Ascending aorta (tissue), 2 donors: ENCODE measurements at regions of chr15 and their contacts with region 1.

Region 1: GRCh38 chr15:101641166-101641764 is 10.9 kb downstream of the TM2D3 start:
- DNase-seq: peak in 1 of 2 donors; percentile 81
- H3K4me3 ChIP-seq: no peak overlapping the region
- H3K27ac ChIP-seq: no peak overlapping the region
- H3K4me1 ChIP-seq: no peaks in the 10 kb centered on the region
- H3K27me3 ChIP-seq: no peaks in the 10 kb centered on the region
- CTCF ChIP-seq: peak; percentile 66 to 93 (median 87)

Region 2: DNA sequence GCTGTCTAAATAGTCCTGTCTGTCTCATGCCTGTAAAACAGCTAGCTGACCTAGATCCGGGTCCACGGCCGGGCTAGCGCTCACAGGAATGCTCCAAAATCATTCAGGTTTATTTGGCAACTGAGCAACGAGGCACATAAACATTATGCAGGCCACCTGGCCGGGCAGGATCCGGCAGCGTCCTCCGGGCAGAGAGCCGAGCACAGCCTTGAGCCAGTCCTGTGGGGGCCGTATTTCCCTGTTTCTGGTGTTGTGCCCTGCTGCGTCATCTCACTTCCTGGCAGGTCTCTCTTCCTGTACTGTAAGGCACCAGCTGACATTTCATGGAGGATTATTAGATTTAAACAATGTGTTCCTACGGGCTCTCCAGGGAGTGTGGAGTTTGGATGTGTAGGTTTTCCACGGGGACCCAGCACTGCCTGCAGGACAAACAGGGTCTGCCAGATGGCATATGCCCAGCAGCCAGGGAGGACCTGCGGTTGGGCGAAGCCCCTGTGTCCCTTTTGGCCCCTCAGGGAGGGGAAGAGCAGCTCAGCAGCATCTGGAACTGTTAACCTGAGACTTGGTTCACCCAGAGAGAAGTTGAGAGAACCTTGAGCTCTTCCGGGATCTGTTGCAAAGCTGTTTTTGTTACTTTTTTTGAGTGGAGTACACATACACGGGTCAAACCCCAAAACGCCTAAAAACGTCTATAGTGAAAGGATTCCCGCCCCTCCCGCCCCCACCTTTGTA is 738.7 kb before region 1 on chr15:
- intact Hi-C with region 1: loop called (anchors 10 kb)
- DNase-seq: peak in 1 of 2 donors; percentile 89
- H3K4me3 ChIP-seq: peak overlapping the region; percentile 39 to 46
- H3K27ac ChIP-seq: peak overlapping the region; percentile 47 to 67
- H3K4me1 ChIP-seq: peaks cover 0 to 19% of the 10 kb centered on the region in 2 donors
- H3K27me3 ChIP-seq: no peaks in the 10 kb centered on the region
- CTCF ChIP-seq: no peak

Region 3: DNA sequence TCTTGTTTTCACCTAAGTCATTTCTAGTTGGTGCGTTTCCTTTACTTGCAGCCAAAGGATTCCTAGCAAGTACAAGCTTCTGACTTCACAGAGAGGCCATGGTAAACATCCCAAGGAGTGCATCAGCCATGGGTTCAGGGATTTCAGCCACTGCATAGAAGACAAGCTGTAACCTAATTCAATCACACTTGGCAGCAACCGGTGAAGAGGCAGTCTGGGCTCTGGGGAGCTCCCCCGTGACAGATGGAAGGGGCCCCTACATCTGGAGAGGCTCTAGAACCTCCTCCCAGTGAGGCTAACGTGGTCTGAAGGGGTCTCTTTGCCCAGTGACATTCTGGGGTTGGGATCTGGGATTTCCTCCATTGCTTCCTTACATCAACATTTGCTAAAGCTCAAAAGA is 337.9 kb before region 1 on chr15:
- intact Hi-C with region 1: loop called (anchors 5 kb)
- DNase-seq: no peak
- H3K4me3 ChIP-seq: no peak overlapping the region
- H3K27ac ChIP-seq: no peak overlapping the region
- H3K4me1 ChIP-seq: no peaks in the 10 kb centered on the region
- H3K27me3 ChIP-seq: no peaks in the 10 kb centered on the region
- CTCF ChIP-seq: no peak